Activated naive CD4-positive, alpha-beta T cell treated with anti-CD3 and anti-CD28 coated beads for 36 hours (primary cell): ENCODE measurements at regions of chr5 and their contacts with region 1.

Region 1: GRCh38 chr5:51082741-51083140 is 300.5 kb upstream of the ISL1 start:
- DNase-seq: no peak
- H3K4me3 Mint-ChIP-seq: no peak overlapping the region
- H3K27ac Mint-ChIP-seq: no peak overlapping the region
- H3K4me1 Mint-ChIP-seq: no peaks in the 10 kb centered on the region
- H3K27me3 Mint-ChIP-seq: no peaks in the 10 kb centered on the region

Region 2: GRCh38 chr5:51156838-51157237 is 74.1 kb after region 1 on chr5:
- CTCF ChIA-PET with region 1: no interaction called
- intact Hi-C with region 1: loop called (anchors 2 kb)
- DNase-seq: no peak
- H3K4me3 Mint-ChIP-seq: no peak overlapping the region
- H3K27ac Mint-ChIP-seq: no peak overlapping the region
- H3K4me1 Mint-ChIP-seq: no peaks in the 10 kb centered on the region
- H3K27me3 Mint-ChIP-seq: no peaks in the 10 kb centered on the region